ENCODE measurements at regions of chr10 and their contacts with region 1.

Region 1: GRCh38 chr10:80158598-80159127 is 26.1 kb downstream of the PLAC9 start:
- DNase-seq: peak in 2 of 3 donors; percentile 66 to 75
- ATAC-seq: peak; percentile 61
- H3K4me3 ChIP-seq: no peak overlapping the region
- H3K4me1 ChIP-seq: peaks cover 4% of the 10 kb centered on the region
- CTCF ChIP-seq: no peak

Region 2: DNA sequence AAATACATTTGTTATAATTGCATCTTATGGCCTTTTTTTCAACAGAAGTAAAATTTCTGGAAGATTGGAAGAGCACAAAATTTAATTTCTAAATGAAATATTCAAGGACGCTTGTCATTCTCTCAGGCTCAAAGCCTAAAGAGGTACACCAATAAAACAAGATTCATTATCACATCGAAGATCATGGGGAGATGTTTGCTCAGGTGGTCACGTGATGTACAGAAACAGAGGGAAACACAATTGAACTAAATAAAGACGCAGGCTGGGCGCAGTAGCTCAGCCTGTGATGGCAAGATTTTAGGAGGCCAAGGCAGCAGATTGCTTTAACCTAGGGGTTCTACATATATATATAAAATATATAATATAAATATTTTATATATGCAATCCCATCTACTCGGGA is 117.5 kb before region 1 on chr10:
- intact Hi-C with region 1: no loop called
- DNase-seq: no peak
- ATAC-seq: no peak
- H3K4me3 ChIP-seq: no peak overlapping the region
- H3K4me1 ChIP-seq: no peaks in the 10 kb centered on the region
- CTCF ChIP-seq: no peak

Region 3: GRCh38 chr10:80205478-80206276 is 47.0 kb after region 1 on chr10 and contains the start of gene ANXA11:
- intact Hi-C with region 1: loop called (anchors 10 kb)
- DNase-seq: peak; percentile 92 to 93 (median 93)
- ATAC-seq: peak; percentile 78
- H3K4me3 ChIP-seq: peak within 1 kb of the TSS; percentile 97
- H3K4me1 ChIP-seq: peaks cover 44% of the 10 kb centered on the region
- CTCF ChIP-seq: no peak
- total RNA-seq, gene ANXA11: 252 to 424 (median 367) TPM

Measured in mucosa of descending colon (tissue), 3 donors.